ENCODE measurements at regions of chr2 and their contacts with region 1.

Region 1: GRCh38 chr2:46917628-46918027 is 2.0 kb upstream of the MCFD2 start:
- DNase-seq: peak; percentile 21
- H3K4me3 Mint-ChIP-seq: peak overlapping the region; percentile 82
- H3K27ac Mint-ChIP-seq: peak overlapping the region; percentile 3
- H3K4me1 Mint-ChIP-seq: peaks cover 66% of the 10 kb centered on the region
- H3K27me3 Mint-ChIP-seq: no peaks in the 10 kb centered on the region

Region 2: GRCh38 chr2:46858702-46859090 is 58.9 kb before region 1 on chr2:
- CTCF ChIA-PET with region 1: no interaction called
- POLR2A ChIA-PET with region 1: no interaction called
- DNase-seq: no peak
- H3K4me3 Mint-ChIP-seq: no peak overlapping the region
- H3K27ac Mint-ChIP-seq: no peak overlapping the region
- H3K4me1 Mint-ChIP-seq: no peaks in the 10 kb centered on the region
- H3K27me3 Mint-ChIP-seq: peaks cover 3% of the 10 kb centered on the region

Region 3: GRCh38 chr2:46929612-46930011 is 12.0 kb after region 1 on chr2:
- CTCF ChIA-PET with region 1: interaction called, 13 read pairs
- POLR2A ChIA-PET with region 1: no interaction called
- DNase-seq: no peak
- H3K4me3 Mint-ChIP-seq: no peak overlapping the region
- H3K27ac Mint-ChIP-seq: no peak overlapping the region
- H3K4me1 Mint-ChIP-seq: peaks cover 8% of the 10 kb centered on the region
- H3K27me3 Mint-ChIP-seq: no peaks in the 10 kb centered on the region

Measured in activated CD4-positive, alpha-beta T cell treated with anti-CD3 and anti-CD28 coated beads, Interleukin-2, amount 10 ng/mL, durations not matched to agents 7 days and 5 days (primary cell).